PC-3 (cell line): ENCODE measurements at regions of chr4 and their contacts with region 1.

Region 1: GRCh38 chr4:73258686-73259570 is at the start of gene ANKRD17:
- DNase-seq: peak; percentile 96
- ATAC-seq: peak; percentile 65
- H3K4me3 ChIP-seq: peak within 1 kb of the TSS; percentile 90
- H3K27ac ChIP-seq: peak within 1 kb of the TSS; percentile 92
- H3K4me1 ChIP-seq: peaks cover 26% of the 10 kb centered on the region
- H3K27me3 ChIP-seq: no peaks in the 10 kb centered on the region
- CTCF ChIP-seq: 0 out of 2 replicates have a peak, but pooled peaks have one; percentile 2
- total RNA-seq, gene ANKRD17: 51.2 and 64.4 TPM in 2 replicates

Region 2: GRCh38 chr4:72418458-72418857 is 840.5 kb before region 1 on chr4:
- CTCF ChIA-PET with region 1: no interaction called
- POLR2A ChIA-PET with region 1: no interaction called
- intact Hi-C with region 1: no loop called
- DNase-seq: peak; percentile 90
- ATAC-seq: peak; percentile 92
- H3K4me3 ChIP-seq: no peak overlapping the region
- H3K27ac ChIP-seq: no peak overlapping the region
- H3K4me1 ChIP-seq: peaks cover 9% of the 10 kb centered on the region; the same call in 1 of the 2 replicates
- H3K27me3 ChIP-seq: no peaks in the 10 kb centered on the region
- CTCF ChIP-seq: no peak

Region 3: GRCh38 chr4:73069338-73070073 is 189.4 kb before region 1 on chr4 and contains the start of gene COX18:
- CTCF ChIA-PET with region 1: no interaction called
- POLR2A ChIA-PET with region 1: no interaction called
- intact Hi-C with region 1: loop called (anchors 1 kb)
- DNase-seq: peak; percentile 100
- ATAC-seq: peak; percentile 92
- H3K4me3 ChIP-seq: peak within 1 kb of the TSS; percentile 93
- H3K27ac ChIP-seq: peak within 1 kb of the TSS; percentile 86
- H3K4me1 ChIP-seq: peaks cover 16% of the 10 kb centered on the region
- H3K27me3 ChIP-seq: no peaks in the 10 kb centered on the region
- CTCF ChIP-seq: no peak
- total RNA-seq, gene COX18: 32.8 and 40.0 TPM in 2 replicates

Region 4: DNA sequence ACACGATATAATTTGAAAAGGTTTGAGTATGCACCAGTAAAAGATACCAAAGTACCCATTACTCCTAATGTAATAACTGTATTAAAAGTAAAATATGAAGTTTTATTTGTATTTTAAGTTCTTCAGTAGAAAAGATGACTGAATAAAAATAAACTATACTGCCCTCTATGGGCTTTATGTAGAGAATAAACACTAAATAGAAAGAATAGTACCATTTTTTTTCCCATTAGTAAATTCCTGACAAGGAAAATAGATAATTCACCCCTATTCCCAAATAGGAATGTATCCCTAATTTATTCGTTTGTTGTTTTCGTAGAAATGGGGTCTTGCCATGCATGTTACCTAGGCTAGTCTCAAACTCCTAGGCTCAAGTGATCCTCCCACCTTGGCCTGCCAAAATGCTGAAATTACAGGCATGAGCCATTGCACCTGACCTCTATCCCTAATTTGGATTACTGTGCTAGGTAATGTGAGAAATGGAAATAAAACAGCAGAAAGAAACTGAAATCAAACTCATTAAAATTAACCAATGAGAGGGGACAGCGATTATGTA is 115.9 kb before region 1 on chr4:
- CTCF ChIA-PET with region 1: no interaction called
- POLR2A ChIA-PET with region 1: interaction called, 3 read pairs
- intact Hi-C with region 1: loop called (anchors 1 kb)
- DNase-seq: peak; percentile 14
- ATAC-seq: no peak
- H3K4me3 ChIP-seq: no peak overlapping the region
- H3K27ac ChIP-seq: no peak overlapping the region
- H3K4me1 ChIP-seq: no peaks in the 10 kb centered on the region
- H3K27me3 ChIP-seq: no peaks in the 10 kb centered on the region
- CTCF ChIP-seq: peak; percentile 66

Region 5: DNA sequence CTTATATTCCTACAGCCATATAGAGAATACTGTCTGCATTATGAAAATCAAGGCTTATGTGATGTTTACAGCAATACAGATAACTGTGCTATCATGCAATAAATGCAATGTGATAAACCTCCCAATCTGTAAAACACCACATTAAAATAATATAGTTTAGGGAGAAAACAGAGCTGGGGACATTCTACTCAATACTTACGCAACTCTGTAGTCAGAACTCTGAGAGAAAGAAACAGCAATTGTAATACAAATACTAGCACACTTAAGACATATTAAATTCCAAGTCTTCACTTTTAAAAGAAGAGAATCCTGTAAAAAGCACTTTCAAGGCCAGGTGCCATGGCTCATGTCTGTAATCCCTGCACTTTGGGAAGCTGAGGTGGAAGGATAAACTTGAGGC is 61.7 kb before region 1 on chr4:
- CTCF ChIA-PET with region 1: interaction called, 11 read pairs
- POLR2A ChIA-PET with region 1: no interaction called
- intact Hi-C with region 1: no loop called
- DNase-seq: no peak
- ATAC-seq: no peak
- H3K4me3 ChIP-seq: no peak overlapping the region
- H3K27ac ChIP-seq: no peak overlapping the region
- H3K4me1 ChIP-seq: peaks cover 5% of the 10 kb centered on the region; the same call in 1 of the 2 replicates
- H3K27me3 ChIP-seq: no peaks in the 10 kb centered on the region
- CTCF ChIP-seq: no peak

Region 6: DNA sequence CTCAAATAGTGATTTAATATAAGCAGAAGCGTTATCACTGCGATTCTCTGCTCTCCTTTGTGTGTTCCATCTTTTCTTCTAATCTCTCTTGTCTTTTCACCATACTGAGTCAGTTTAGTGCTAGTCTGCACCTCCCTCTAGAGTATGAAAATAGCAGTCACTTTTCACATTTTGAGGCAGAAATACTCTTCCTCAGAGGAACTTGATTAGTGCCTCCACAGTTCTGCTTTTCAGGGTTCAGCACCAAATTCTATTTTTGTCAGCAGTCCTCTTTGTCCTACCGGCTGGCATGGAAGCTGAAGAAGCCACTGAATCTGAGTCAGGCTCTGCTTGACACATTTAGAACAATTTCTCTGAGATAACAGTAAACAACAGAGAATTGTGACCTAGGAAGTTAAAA is 49.4 kb after region 1 on chr4:
- CTCF ChIA-PET with region 1: interaction called, 4 read pairs
- POLR2A ChIA-PET with region 1: interaction called, 15 read pairs
- intact Hi-C with region 1: loop called (anchors 1 kb)
- DNase-seq: peak; percentile 53
- ATAC-seq: peak; percentile 69
- H3K4me3 ChIP-seq: no peak overlapping the region
- H3K27ac ChIP-seq: no peak overlapping the region
- H3K4me1 ChIP-seq: peaks cover 11% of the 10 kb centered on the region
- H3K27me3 ChIP-seq: no peaks in the 10 kb centered on the region
- CTCF ChIP-seq: peak; percentile 60; the same call in 1 of the 2 replicates

Region 7: DNA sequence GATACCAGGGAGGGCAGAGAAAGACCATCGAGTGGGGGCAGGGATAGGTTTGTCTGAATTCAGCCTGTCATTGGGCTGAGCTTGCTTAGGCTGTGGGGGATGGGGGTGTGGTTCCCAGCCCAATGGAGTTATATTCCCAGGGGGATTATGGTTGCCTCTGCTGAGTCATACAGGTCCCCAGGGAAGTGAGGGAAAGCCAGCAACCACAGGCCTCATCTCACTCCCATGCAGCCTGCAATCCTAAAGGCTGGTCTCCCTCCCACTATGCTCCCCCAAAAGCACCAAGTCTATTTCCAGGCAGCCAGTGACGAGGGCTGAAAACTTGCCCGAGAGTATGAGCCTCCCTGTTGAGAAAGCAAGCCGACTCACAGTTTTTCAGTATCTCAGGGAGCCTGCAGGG is 261.9 kb after region 1 on chr4:
- CTCF ChIA-PET with region 1: no interaction called
- POLR2A ChIA-PET with region 1: no interaction called
- intact Hi-C with region 1: no loop called
- DNase-seq: peak; percentile 48
- ATAC-seq: no peak; the same call in 1 of the 2 replicates
- H3K4me3 ChIP-seq: no peak overlapping the region
- H3K27ac ChIP-seq: no peak overlapping the region; the same call in 1 of the 2 replicates
- H3K4me1 ChIP-seq: peaks cover 12% of the 10 kb centered on the region
- H3K27me3 ChIP-seq: no peaks in the 10 kb centered on the region
- CTCF ChIP-seq: no peak